Transverse colon (tissue), 4 donors: ENCODE measurements at regions of chr1 and their contacts with region 1.

Region 1: GRCh38 chr1:221736714-221737113 is 5.2 kb downstream of the DUSP10 start:
- DNase-seq: no peak
- H3K4me3 ChIP-seq: no peak overlapping the region
- H3K27ac ChIP-seq: peak overlapping the region in 2 of 4 donors; percentile 51 to 61
- H3K4me1 ChIP-seq: peaks cover 3 to 58% (median 12%) of the 10 kb centered on the region in 4 donors
- H3K27me3 ChIP-seq: no peaks in the 10 kb centered on the region
- CTCF ChIP-seq: no peak
- EP300 ChIP-seq: no peak
- POLR2A ChIP-seq: no peak

Region 2: DNA sequence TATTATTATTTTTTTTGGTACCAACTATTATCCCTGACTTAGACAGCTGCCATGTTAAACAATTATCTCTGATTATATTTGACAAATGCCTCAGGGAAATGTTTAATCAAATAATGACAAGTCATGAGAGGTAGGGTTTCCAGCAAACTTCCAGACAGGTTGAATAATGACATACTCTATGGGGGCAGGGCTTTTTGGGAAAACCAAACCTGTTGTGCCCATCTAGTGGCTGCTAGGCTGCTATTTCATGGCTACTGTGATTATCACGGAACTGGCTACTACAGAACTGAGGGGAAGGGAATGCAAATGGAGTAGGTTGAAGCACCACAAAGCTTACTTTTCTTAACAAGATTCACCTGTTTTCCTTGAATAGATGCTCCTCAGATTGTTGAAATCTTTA is 72.5 kb before region 1 on chr1:
- in situ Hi-C with region 1: no loop called
- intact Hi-C with region 1: loop called (anchors 2 kb)
- DNase-seq: no peak
- H3K4me3 ChIP-seq: no peak overlapping the region
- H3K27ac ChIP-seq: no peak overlapping the region
- H3K4me1 ChIP-seq: no peaks in the 10 kb centered on the region
- H3K27me3 ChIP-seq: no peaks in the 10 kb centered on the region
- CTCF ChIP-seq: no peak
- EP300 ChIP-seq: no peak
- POLR2A ChIP-seq: no peak